Gastrocnemius medialis (tissue), 4 donors: ENCODE measurements at regions of chrX and their contacts with region 1.

Region 1: DNA sequence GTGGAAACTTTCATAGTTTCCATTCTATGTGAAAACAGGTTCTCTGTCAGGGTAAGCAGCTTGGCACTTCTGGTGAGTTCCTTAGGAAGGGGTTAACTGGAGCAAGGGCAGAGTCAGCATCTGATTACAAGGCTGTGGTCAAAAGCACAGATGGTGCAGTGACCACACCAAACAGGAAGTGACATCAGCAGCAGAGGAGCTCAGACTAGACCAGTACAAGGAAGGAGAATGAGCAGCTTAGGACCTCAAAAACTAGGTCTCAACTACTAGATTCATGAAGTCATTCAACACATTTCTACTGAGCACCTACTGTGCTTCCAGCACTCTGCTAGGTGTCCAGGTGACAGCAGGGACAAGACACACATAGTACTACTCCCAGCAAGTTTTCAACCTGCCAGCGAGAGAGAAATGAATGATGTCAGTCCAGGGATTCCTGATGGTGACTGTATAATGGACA is 130.2 kb downstream of the AMELX start:
- DNase-seq: peak in 1 of 2 donors; percentile 15
- ATAC-seq: peak in 1 of 2 donors; percentile 25
- H3K4me3 ChIP-seq: no peak overlapping the region
- H3K27ac ChIP-seq: peak overlapping the region in 1 of 4 donors; percentile 12
- H3K4me1 ChIP-seq: peaks cover 0 to 3% of the 10 kb centered on the region in 2 donors
- H3K27me3 ChIP-seq: no peaks in the 10 kb centered on the region
- CTCF ChIP-seq: no peak
- POLR2A ChIP-seq: no peak

Region 2: DNA sequence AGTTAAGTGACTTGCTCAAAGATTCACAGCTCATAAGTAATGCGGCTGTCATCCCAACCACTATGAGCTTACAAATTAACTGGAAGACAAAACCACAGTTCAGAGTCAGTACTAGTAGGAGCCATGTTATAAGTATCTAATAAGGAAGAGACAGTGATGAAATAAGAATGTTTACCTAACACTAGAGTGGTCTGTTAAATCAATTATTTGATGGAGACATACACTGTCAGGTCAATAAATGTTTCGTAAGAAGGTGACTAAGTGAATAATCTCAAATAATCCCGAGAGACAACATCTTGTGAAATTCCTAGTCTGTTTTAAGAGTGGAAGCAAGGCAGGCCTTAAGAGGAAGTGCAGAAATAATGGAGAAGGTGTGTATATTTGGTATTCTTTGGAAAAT is 156.0 kb before region 1 on chrX:
- in situ Hi-C with region 1: no loop called
- intact Hi-C with region 1: no loop called
- DNase-seq: no peak
- ATAC-seq: peak in 1 of 2 donors; percentile 21
- H3K4me3 ChIP-seq: no peak overlapping the region
- H3K27ac ChIP-seq: peak overlapping the region in 2 of 4 donors; percentile 62 to 64
- H3K4me1 ChIP-seq: peaks cover 5 to 6% of the 10 kb centered on the region in 2 donors
- H3K27me3 ChIP-seq: no peaks in the 10 kb centered on the region
- CTCF ChIP-seq: no peak
- POLR2A ChIP-seq: no peak

Region 3: DNA sequence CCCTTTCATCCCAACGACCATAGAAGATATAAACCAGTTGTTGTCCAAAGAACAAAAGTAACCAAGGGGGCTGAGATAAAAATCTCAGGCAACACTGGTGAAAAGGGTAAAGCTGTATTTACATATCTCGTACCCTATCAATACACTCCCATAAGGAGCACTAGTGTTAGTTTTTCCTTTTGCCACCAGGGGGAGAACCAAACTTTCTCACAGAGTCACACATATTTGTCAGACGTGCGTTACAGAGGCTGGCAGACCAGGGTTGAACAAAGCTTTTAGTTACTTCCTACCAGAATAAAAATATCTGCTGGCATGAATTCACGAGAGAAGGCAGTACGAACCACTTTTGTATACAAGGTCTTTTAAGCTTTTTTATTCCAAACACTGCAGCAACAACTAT is 41.9 kb before region 1 on chrX:
- in situ Hi-C with region 1: no loop called
- intact Hi-C with region 1: loop called (anchors 2 kb)
- DNase-seq: peak; percentile 3 to 19
- ATAC-seq: peak; percentile 71 to 74
- H3K4me3 ChIP-seq: no peak overlapping the region
- H3K27ac ChIP-seq: no peak overlapping the region
- H3K4me1 ChIP-seq: no peaks in the 10 kb centered on the region
- H3K27me3 ChIP-seq: no peaks in the 10 kb centered on the region
- CTCF ChIP-seq: peak in 4 of 5 experiments; percentile 29 to 45 (median 44)
- POLR2A ChIP-seq: no peak